Activated CD4-positive, alpha-beta T cell treated with anti-CD3 and anti-CD28 coated beads for 36 hours (primary cell): ENCODE measurements at regions of chr3 and their contacts with region 1.

Region 1: DNA sequence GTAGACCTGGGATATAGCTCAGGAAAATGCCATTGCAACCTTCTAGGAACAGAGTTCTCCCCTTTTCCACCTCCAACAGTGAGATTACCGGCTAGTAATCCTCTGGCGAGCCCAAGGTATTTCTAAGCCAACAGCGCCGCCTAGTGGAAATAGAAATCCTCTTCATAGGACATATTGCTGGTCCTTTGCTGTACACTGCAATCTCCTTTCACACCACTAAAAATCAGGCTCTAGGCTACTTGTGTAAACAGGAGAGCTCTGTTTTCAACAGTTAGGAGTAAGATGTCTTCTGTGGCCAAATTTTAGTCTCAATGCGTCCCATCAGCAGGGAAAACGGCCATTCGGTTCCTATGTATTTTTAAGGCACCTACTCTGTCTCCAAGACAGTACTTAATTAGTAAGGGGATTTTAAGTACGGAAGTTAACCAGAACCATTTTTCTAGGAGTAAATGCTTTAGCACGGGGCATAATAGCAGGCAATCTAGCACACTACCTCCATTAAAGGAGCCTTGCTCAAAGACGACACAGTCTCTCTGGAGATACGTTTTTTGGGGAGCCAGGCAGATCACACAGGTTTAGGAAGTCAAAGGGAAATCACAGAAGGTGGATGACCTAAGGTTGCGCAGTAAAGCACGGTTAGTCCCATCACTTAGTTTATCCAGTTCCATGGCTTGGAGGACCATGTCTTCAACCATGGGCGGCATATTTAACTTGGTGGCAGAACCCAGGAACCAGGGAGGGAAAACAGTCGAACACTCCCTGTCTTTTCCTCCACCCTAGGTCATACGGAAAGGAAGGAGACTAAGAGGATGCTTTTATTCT is 43.8 kb downstream of the NCEH1 start:
- DNase-seq: peak; percentile 88
- ATAC-seq: peak; percentile 96
- H3K4me3 Mint-ChIP-seq: no peak overlapping the region
- H3K27ac Mint-ChIP-seq: no peak overlapping the region
- H3K4me1 Mint-ChIP-seq: peaks cover 5% of the 10 kb centered on the region
- H3K27me3 Mint-ChIP-seq: no peaks in the 10 kb centered on the region

Region 2: DNA sequence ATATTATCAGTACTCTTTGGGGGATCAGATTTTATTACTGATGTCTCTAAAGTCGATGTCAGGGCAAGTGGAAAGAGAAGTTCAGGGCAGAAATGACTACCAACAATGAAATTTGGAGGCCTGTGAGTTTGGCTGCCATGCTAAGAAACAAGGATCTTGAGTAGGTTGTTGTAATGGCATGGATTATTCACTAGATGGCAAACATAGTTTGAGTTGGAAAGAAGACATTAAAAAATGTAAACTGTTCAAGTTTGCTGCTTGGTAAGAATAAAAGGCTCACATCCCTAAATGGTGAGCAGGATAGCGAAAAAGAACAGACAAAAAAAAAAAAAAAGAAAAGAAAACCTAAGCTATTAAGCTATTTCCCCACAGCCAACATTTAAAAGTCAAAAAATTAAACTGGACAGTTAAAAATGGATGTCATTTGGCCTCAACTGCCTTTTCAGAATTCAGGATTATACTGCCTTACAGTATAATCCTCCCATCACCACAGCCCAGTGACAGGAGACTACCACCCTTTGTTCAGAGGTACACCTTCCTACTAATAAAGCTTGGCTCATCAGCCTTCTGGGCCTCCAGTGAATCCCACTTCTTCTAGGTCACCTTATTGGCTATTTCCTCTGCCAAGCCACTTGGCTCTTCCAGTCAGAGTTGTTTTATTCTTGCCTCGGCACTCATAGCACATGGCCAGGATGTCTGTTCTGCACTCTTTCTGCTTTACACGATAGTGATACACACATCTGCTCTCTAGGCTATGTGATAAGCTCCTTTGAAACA is 1020.5 kb before region 1 on chr3:
- CTCF ChIA-PET with region 1: no interaction called
- POLR2A ChIA-PET with region 1: no interaction called
- intact Hi-C with region 1: loop called in 1 of 2 experiments (anchors 10 kb)
- DNase-seq: no peak
- ATAC-seq: no peak
- H3K4me3 Mint-ChIP-seq: no peak overlapping the region
- H3K27ac Mint-ChIP-seq: no peak overlapping the region
- H3K4me1 Mint-ChIP-seq: no peaks in the 10 kb centered on the region
- H3K27me3 Mint-ChIP-seq: no peaks in the 10 kb centered on the region

Region 3: GRCh38 chr3:172039436-172040077 is 627.5 kb before region 1 on chr3 and contains the start of gene FNDC3B:
- CTCF ChIA-PET with region 1: no interaction called
- POLR2A ChIA-PET with region 1: no interaction called
- intact Hi-C with region 1: loop called in 1 of 2 experiments (anchors 2 kb)
- DNase-seq: peak; percentile 95
- ATAC-seq: peak; percentile 93
- H3K4me3 Mint-ChIP-seq: peak within 1 kb of the TSS; percentile 86
- H3K27ac Mint-ChIP-seq: peak within 1 kb of the TSS; percentile 88
- H3K4me1 Mint-ChIP-seq: peaks cover 24% of the 10 kb centered on the region
- H3K27me3 Mint-ChIP-seq: peaks cover 2% of the 10 kb centered on the region
- total RNA-seq, gene FNDC3B: 10.5 to 14.2 TPM

Region 4: DNA sequence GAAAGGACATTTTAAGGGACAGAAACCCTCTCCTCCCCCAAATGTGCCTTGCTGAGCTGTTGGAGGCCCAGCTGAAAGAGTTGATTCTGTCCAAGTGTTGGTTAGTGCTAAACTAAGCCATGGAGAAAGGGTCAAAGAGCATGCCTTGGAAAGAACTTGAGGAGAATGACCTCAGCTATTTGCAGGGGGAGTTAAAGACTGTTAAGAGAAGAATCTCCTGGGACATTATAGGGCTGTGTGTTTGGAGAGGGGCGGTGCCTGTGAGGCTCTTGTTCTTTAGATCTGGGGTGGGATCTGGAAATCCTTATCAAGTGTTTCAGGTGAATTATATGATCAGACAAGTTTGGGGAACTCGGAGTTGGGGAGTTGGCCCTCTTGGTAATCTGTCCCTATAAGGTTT is 614.7 kb before region 1 on chr3:
- CTCF ChIA-PET with region 1: no interaction called
- POLR2A ChIA-PET with region 1: no interaction called
- intact Hi-C with region 1: no loop called
- DNase-seq: no peak
- ATAC-seq: no peak
- H3K4me3 Mint-ChIP-seq: no peak overlapping the region
- H3K27ac Mint-ChIP-seq: no peak overlapping the region
- H3K4me1 Mint-ChIP-seq: peaks cover 18% of the 10 kb centered on the region
- H3K27me3 Mint-ChIP-seq: no peaks in the 10 kb centered on the region

Region 5: DNA sequence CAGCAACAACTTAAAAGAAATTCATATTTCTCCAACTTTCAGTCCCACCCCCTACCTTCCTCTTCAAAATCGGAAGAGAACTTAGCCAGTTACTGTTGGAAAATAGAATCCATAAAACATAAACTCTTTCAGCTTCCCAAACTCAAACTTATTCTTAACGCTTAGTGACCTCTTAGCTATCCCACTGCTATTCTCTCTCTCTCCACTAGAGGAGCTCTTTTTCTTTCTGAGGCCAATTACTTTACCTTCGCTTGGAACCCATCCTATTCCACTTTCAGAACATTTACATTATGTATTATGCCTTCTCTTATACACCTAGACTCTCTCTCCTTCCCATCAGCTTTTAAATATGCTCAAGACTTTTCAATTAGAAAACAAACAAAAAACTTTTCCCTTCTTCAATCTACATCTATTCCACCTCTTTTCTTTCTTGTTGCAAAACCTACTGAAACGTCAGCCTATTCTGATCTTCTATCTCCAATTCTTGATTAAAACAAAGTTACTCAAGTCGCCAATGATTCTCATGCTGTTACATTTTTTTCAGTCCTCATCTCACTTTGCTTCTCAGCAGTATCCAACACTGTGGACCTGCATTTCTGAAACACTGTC is 205.4 kb before region 1 on chr3:
- CTCF ChIA-PET with region 1: interaction called, 12 read pairs
- POLR2A ChIA-PET with region 1: no interaction called
- intact Hi-C with region 1: loop called in 1 of 2 experiments (anchors 2 kb)
- DNase-seq: no peak
- ATAC-seq: peak; percentile 53
- H3K4me3 Mint-ChIP-seq: no peak overlapping the region
- H3K27ac Mint-ChIP-seq: no peak overlapping the region
- H3K4me1 Mint-ChIP-seq: no peaks in the 10 kb centered on the region
- H3K27me3 Mint-ChIP-seq: peaks cover 2% of the 10 kb centered on the region

Region 6: GRCh38 chr3:172648747-172649146 is 18.3 kb before region 1 on chr3:
- CTCF ChIA-PET with region 1: interaction called, 12 read pairs
- POLR2A ChIA-PET with region 1: no interaction called
- intact Hi-C with region 1: no loop called
- DNase-seq: no peak
- ATAC-seq: no peak
- H3K4me3 Mint-ChIP-seq: no peak overlapping the region
- H3K27ac Mint-ChIP-seq: no peak overlapping the region
- H3K4me1 Mint-ChIP-seq: no peaks in the 10 kb centered on the region
- H3K27me3 Mint-ChIP-seq: no peaks in the 10 kb centered on the region

Region 7: GRCh38 chr3:172726382-172726781 is 59.3 kb after region 1 on chr3:
- CTCF ChIA-PET with region 1: no interaction called
- POLR2A ChIA-PET with region 1: no interaction called
- intact Hi-C with region 1: no loop called
- DNase-seq: no peak
- ATAC-seq: no peak
- H3K4me3 Mint-ChIP-seq: no peak overlapping the region
- H3K27ac Mint-ChIP-seq: no peak overlapping the region
- H3K4me1 Mint-ChIP-seq: no peaks in the 10 kb centered on the region
- H3K27me3 Mint-ChIP-seq: no peaks in the 10 kb centered on the region